HepG2 (cell line): ENCODE measurements at regions of chr7 and their contacts with region 1.

Region 1: GRCh38 chr7:134900166-134900982 is 85.9 kb upstream of the AGBL3 start:
- DNase-seq: no peak
- ATAC-seq: no peak
- H3K4me3 ChIP-seq: peak overlapping the region in 2 of 3 experiments; percentile 52 to 67; a peak in 1 of 6 replicates
- H3K27ac ChIP-seq: peak overlapping the region; percentile 98
- H3K4me1 ChIP-seq: peaks cover 96% of the 10 kb centered on the region
- H3K27me3 ChIP-seq: no peaks in the 10 kb centered on the region
- CTCF ChIP-seq: no peak
- EP300 ChIP-seq: no peak; a peak in 1 of 4 replicates
- POLR2A ChIP-seq: no peak
- RAD21 ChIP-seq: no peak

Region 2: DNA sequence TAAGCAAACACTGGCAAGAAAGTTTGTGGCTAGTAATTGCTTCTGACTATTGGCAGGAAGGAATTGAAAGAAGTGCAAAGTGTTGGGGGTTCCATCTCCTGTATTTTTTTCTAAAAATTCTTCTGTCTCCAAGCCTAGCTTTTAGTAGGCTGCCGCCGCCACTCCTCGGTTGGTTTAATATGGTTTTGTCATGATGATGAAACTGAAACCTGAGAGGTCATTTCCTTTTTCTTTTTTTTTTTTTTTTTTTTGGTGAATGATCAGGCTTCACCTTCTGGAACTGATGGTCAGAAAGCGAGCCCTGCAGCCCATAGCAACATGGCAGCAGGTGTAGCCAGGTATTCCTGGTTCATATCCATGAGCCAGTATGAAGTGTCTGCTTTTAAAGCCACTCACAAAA is 10.6 kb after region 1 on chr7:
- CTCF ChIA-PET with region 1: no interaction called
- POLR2A ChIA-PET with region 1: interaction called, 13 read pairs
- in situ Hi-C with region 1: no loop called
- intact Hi-C with region 1: loop called (anchors 1 kb)
- DNase-seq: no peak
- ATAC-seq: no peak
- H3K4me3 ChIP-seq: no peak overlapping the region
- H3K27ac ChIP-seq: peak overlapping the region; percentile 63
- H3K4me1 ChIP-seq: peaks cover 49% of the 10 kb centered on the region
- H3K27me3 ChIP-seq: no peaks in the 10 kb centered on the region
- CTCF ChIP-seq: no peak
- EP300 ChIP-seq: no peak
- POLR2A ChIP-seq: no peak
- RAD21 ChIP-seq: no peak